Left colon (tissue), 2 donors: ENCODE measurements at regions of chr6 and their contacts with region 1.

Region 1: DNA sequence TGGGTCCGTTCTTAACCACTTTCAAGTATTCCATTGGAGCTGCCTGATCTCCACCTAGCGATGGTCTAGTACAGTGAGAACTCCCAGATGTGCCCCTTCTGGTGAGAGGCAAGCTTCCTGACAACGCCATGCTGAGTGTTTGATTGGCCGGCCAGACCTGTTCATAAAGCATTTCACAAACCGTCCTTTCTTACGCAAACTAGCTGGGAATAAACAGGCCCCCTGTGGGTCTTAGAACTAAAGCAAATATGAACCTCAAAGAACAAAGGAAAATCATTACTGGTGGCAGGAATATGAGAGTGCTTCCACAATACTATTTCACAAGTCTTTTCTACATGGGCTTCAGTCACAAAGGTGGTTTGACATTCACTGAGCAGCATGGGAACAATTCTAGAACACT is 15.6 kb upstream of the GCNT2 start:
- DNase-seq: no peak
- ATAC-seq: no peak

Region 2: GRCh38 chr6:10687582-10687981 is 182.1 kb after region 1 on chr6:
- intact Hi-C with region 1: loop called in 1 of 2 experiments (anchors 10 kb)
- DNase-seq: no peak
- ATAC-seq: no peak

Region 3: DNA sequence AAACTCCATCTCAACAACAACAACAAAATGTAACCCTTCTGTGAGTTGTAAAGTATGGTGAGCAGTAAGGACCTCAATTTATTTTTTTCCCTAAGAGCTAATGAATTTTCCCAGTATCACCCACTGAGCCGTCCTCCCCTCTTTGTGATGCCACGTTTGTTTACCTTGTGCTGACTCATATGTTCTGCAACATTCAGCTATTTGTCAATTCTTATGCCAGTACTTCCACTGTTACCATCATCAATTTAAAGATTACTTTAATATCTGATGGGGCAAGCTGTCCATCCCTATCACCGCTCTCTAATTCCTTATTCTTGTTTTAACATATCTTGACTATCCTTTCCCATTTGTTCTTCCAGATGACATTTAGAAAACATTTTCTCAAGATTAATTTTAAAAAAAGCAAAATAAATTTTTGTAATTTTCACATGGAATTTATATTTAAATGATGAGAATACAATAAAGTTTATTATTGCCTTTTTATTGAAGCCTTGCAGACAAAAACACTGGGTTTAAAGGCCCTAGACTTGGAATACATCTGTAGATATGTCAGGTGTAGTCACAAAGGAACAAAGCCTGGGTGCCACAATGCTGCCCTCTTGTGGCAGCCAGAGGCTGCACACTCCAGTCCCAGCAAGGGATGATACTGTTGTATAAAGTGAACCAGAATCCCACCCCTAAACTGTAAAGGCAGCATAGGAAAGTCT is 295.5 kb after region 1 on chr6:
- intact Hi-C with region 1: loop called in 1 of 2 experiments (anchors 10 kb)
- DNase-seq: peak in 1 of 2 donors; percentile 49
- ATAC-seq: peak; percentile 91